HepG2 (cell line): ENCODE measurements at regions of chr2 and their contacts with region 1.

Region 1: DNA sequence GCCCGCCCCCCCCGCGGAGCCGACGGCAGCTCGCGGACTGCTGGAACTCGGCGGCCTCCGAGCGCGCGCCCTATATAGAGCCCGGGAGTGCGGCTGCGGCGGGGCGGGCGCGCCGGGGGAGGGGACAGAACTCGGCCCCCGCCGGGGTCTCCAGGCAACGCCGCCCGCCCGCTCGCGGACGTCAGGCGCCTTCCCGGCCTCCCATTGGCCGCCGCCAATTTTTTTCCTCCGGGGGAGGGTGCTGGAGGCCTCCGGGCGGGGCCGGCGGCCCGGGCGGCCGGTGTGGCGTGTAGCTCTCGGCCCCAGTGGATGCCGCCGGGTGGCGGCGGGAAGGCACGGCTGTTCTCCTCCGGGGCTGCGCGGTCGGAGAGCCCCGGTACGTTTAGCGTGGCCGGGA is at the start of gene ZFP36L2:
- DNase-seq: peak; percentile 92
- ATAC-seq: peak; percentile 63
- H3K4me3 ChIP-seq: peak within 1 kb of the TSS; percentile 80 to 97 (median 89)
- H3K27ac ChIP-seq: peak within 1 kb of the TSS; percentile 95
- H3K4me1 ChIP-seq: peaks cover 54% of the 10 kb centered on the region
- H3K27me3 ChIP-seq: no peaks in the 10 kb centered on the region
- CTCF ChIP-seq: no peak; the same call in 1 of the 2 replicates
- EP300 ChIP-seq: peak in 1 of 2 experiments; percentile 15; a peak in 1 of 4 replicates
- POLR2A ChIP-seq: peak in 1 of 2 experiments; percentile 98; a peak in 2 of 4 replicates
- RAD21 ChIP-seq: peak; percentile 36; the same call in 1 of the 2 replicates
- total RNA-seq, gene ZFP36L2: 21.8 and 32.5 TPM in 2 replicates

Region 2: GRCh38 chr2:42810121-42810970 is 416.2 kb before region 1 on chr2:
- CTCF ChIA-PET with region 1: no interaction called
- POLR2A ChIA-PET with region 1: interaction called, 21 read pairs
- in situ Hi-C with region 1: no loop called
- intact Hi-C with region 1: no loop called
- DNase-seq: peak; percentile 94
- ATAC-seq: peak; percentile 84
- H3K4me3 ChIP-seq: peak overlapping the region; percentile 79 to 93 (median 80)
- H3K27ac ChIP-seq: peak overlapping the region; percentile 98
- H3K4me1 ChIP-seq: peaks cover 19% of the 10 kb centered on the region
- H3K27me3 ChIP-seq: no peaks in the 10 kb centered on the region; a peak in 2 of 5 replicates
- CTCF ChIP-seq: 0 out of 2 replicates have a peak, but pooled peaks have one; percentile 31
- EP300 ChIP-seq: peak; percentile 34 to 36; a peak in 2 of 4 replicates
- POLR2A ChIP-seq: peak; percentile 82 to 95
- RAD21 ChIP-seq: peak; percentile 52; the same call in 1 of the 2 replicates

Region 3: GRCh38 chr2:42935692-42936681 is 290.6 kb before region 1 on chr2:
- CTCF ChIA-PET with region 1: no interaction called
- POLR2A ChIA-PET with region 1: interaction called, 11 read pairs
- in situ Hi-C with region 1: no loop called
- intact Hi-C with region 1: no loop called
- DNase-seq: no peak
- ATAC-seq: no peak
- H3K4me3 ChIP-seq: no peak overlapping the region
- H3K27ac ChIP-seq: no peak overlapping the region
- H3K4me1 ChIP-seq: peaks cover 94% of the 10 kb centered on the region
- H3K27me3 ChIP-seq: no peaks in the 10 kb centered on the region; a peak in 1 of 5 replicates
- CTCF ChIP-seq: no peak
- EP300 ChIP-seq: no peak
- POLR2A ChIP-seq: no peak
- RAD21 ChIP-seq: no peak

Region 4: DNA sequence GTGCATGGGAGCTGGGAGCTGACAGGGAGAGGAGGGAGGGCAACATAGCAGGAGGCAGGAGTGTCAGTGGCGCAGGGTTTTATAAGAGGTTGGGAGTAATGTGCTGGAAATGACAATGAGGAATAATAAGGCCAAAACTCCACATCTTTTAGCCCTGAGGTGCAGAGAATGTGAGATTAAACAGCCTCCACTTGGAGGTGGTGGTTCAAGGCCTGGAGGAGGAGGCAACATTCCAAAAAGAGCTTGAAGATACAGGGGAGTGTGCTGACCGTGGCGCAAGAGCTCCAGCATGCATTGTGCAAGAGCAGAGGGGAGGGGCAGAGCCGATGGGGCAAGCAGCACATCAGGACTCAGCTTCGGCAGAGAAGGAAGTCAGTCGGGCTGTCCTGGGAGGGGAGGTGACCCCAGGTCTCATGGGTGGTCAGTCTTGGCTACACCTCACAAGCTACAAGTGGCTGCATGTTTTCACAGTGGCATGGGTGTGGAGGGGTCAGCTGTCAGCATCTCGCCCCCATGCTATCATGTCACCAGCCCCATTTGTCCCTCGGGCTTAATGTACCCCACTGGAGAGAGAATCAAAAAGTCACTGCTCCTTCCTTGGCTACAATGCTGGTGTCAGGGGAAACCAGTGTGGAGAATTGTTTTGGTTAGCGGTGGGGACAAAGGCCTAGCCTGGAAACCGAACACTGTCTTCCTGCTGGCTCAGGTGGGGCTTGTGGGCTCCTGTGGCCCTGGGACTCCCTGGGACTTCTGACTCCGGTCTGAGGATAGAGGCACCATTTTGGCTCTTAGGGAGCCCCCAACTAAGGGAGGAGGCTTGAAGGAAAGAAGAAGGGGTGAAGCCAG is 208.2 kb before region 1 on chr2:
- CTCF ChIA-PET with region 1: no interaction called
- POLR2A ChIA-PET with region 1: interaction called, 12 read pairs
- in situ Hi-C with region 1: no loop called
- intact Hi-C with region 1: loop called (anchors 5 kb)
- DNase-seq: peak; percentile 90
- ATAC-seq: peak; percentile 94
- H3K4me3 ChIP-seq: peak overlapping the region in 1 of 3 experiments; percentile 36; a peak in 2 of 6 replicates
- H3K27ac ChIP-seq: peak overlapping the region; percentile 51
- H3K4me1 ChIP-seq: peaks cover 61% of the 10 kb centered on the region
- H3K27me3 ChIP-seq: no peaks in the 10 kb centered on the region
- CTCF ChIP-seq: peak; percentile 60
- EP300 ChIP-seq: peak; percentile 78 to 96; a peak in 3 of 4 replicates
- POLR2A ChIP-seq: peak in 1 of 2 experiments; percentile 52; a peak in 1 of 4 replicates
- RAD21 ChIP-seq: peak; percentile 44

Region 5: GRCh38 chr2:43169987-43170386 is 56.6 kb before region 1 on chr2:
- CTCF ChIA-PET with region 1: interaction called, 6 read pairs
- POLR2A ChIA-PET with region 1: interaction called, 50 read pairs
- in situ Hi-C with region 1: loop called (anchors 10 kb)
- intact Hi-C with region 1: loop called (anchors 1 kb)
- DNase-seq: no peak
- ATAC-seq: peak; percentile 40
- H3K4me3 ChIP-seq: no peak overlapping the region
- H3K27ac ChIP-seq: no peak overlapping the region
- H3K4me1 ChIP-seq: peaks cover 72% of the 10 kb centered on the region
- H3K27me3 ChIP-seq: no peaks in the 10 kb centered on the region
- CTCF ChIP-seq: peak; percentile 85
- EP300 ChIP-seq: no peak
- POLR2A ChIP-seq: no peak
- RAD21 ChIP-seq: peak; percentile 61

Region 6: DNA sequence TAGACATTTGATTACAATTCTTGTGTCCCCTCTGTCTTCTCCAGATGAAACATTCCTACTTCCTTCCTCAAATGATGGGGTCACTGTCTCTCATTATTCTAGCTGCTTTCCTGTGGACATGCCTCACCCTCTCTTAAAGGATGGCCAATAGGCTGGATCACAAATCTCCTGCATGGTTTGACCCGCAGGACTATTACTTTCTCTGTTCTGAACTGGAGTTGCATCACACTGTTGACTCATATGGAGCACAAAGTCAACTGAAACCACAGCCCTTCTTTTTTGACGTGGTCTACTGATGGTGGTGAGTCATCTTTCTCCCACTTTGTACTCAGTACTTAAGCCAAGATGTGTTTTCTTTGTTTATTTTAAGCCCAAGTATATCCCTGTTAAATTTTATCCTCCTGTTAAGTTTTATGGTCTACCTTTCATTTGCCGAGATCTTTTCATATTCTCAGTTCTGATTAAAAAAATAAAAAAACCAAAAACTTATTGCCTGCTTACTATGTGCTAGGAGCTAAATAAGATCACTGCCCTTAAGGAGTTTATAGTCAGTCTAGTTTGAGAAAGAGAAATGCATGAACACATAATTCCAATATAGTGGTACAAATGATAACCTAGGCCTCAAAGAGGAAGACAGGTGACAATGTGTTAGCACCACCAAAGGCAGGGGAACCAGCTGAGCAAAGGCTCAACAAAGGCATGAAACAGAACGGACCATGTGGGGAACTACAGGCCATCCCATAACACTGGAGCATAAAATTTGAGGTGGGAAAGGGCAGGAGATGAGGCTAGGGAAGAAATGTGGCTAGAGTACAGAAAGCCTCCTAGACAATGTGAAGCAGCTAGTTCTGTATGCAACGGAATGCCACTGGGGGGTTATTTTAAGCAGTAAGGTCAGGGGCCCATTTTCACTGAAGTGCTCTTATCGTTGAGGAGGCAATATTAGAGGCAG is 67.5 kb after region 1 on chr2:
- CTCF ChIA-PET with region 1: no interaction called
- POLR2A ChIA-PET with region 1: interaction called, 16 read pairs
- in situ Hi-C with region 1: no loop called
- intact Hi-C with region 1: loop called (anchors 1 kb)
- DNase-seq: peak; percentile 99
- ATAC-seq: peak; percentile 95
- H3K4me3 ChIP-seq: peak overlapping the region in 1 of 3 experiments; percentile 6; a peak in 1 of 6 replicates
- H3K27ac ChIP-seq: peak overlapping the region; percentile 82
- H3K4me1 ChIP-seq: peaks cover 61% of the 10 kb centered on the region
- H3K27me3 ChIP-seq: no peaks in the 10 kb centered on the region
- CTCF ChIP-seq: peak; percentile 23; the same call in 1 of the 2 replicates
- EP300 ChIP-seq: peak; percentile 91 to 98
- POLR2A ChIP-seq: peak in 1 of 2 experiments; percentile 35; a peak in 1 of 4 replicates
- RAD21 ChIP-seq: peak; percentile 48